ENCODE measurements at regions of chr3 and their contacts with region 1.

Region 1: DNA sequence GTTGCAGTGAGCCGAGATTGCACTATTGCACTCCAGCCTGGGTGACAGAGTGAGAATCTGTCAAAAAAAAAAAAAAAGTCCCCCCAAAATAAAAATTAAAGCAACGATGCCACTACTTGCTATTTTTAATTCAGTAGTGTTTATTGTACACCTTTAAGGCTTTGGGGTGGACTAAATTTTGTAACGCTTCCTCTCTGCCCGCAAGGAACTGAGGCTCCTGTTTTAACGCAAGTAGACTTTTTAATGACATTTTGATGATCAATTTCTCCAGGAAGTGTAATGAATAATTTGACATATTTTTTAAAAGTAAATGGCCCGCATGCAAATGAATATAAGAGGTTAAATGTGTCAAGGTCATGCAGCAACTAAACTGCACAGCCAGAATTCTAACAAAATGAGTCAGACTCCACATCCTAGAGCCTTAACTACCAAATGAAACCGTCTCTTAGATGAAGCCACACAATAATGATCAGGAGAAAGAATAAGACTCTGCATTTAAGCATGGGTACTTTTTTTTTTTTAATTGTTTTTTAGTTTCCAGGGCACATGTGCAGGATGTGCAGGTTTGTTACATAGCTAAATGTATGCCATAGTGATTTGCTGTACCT is 96.8 kb upstream of the LMOD3 start:
- DNase-seq: no peak

Region 2: DNA sequence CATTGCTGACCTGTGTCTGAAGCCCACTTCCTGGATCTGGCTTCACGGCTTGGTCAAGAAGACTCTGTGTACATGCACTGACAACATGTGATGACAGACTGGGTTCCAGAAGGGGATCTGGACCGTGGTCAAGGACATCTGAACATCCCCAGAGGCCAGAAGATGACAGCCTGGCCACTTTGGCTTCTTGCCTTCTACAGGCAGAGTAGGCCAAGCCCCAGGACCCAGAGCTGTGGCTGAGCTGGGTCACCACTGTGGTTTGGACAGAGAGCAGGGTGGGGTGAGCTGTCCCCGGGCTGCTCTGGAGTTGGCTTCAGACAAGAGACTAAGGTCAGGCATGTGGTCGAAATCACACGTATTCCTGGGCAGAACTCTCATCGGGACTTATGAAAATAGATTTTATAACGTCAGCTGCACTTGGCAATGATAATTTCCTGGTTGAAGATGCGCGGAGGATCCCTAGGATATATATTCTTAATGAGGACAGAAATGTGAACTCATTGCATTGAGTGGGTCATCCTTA is 280.8 kb after region 1 on chr3:
- intact Hi-C with region 1: loop called in 1 of 2 experiments (anchors 5 kb)
- DNase-seq: peak; percentile 92

Region 3: GRCh38 chr3:69961706-69962439 is 742.7 kb after region 1 on chr3:
- intact Hi-C with region 1: no loop called
- DNase-seq: no peak